Gastrocnemius medialis (tissue), 4 donors: ENCODE measurements at regions of chr19 and their contacts with region 1.

Region 1: GRCh38 chr19:10653715-10654492 is at the start of gene ILF3:
- DNase-seq: peak; percentile 100
- ATAC-seq: peak; percentile 86 to 90
- H3K4me3 ChIP-seq: peak within 1 kb of the TSS; percentile 85 to 99 (median 97)
- H3K27ac ChIP-seq: peak within 1 kb of the TSS; percentile 99 to 100 (median 99)
- H3K4me1 ChIP-seq: peaks cover 31 to 45% of the 10 kb centered on the region in 2 donors
- H3K27me3 ChIP-seq: no peaks in the 10 kb centered on the region
- CTCF ChIP-seq: peak in 2 of 5 experiments; percentile 68 to 82
- POLR2A ChIP-seq: peak; percentile 85 to 91
- total RNA-seq, gene ILF3: 67.3 to 88.2 (median 76.6) TPM

Region 2: GRCh38 chr19:10565567-10566407 is 88.1 kb before region 1 on chr19 and contains the start of gene KRI1:
- in situ Hi-C with region 1: no loop called
- intact Hi-C with region 1: loop called (anchors 5 kb)
- DNase-seq: peak; percentile 97
- ATAC-seq: peak; percentile 77 to 80
- H3K4me3 ChIP-seq: peak within 1 kb of the TSS; percentile 68 to 94 (median 86)
- H3K27ac ChIP-seq: peak within 1 kb of the TSS; percentile 84 to 92 (median 92)
- H3K4me1 ChIP-seq: peaks cover 34 to 35% of the 10 kb centered on the region in 2 donors
- H3K27me3 ChIP-seq: no peaks in the 10 kb centered on the region
- CTCF ChIP-seq: peak; percentile 34 to 75 (median 55)
- POLR2A ChIP-seq: peak; percentile 80 to 94
- total RNA-seq, gene KRI1: 16.8 to 24.1 (median 19.9) TPM

Region 3: GRCh38 chr19:10625003-10625776 is 28.7 kb before region 1 on chr19 and contains the start of gene SLC44A2:
- in situ Hi-C with region 1: no loop called
- intact Hi-C with region 1: loop called (anchors 1 kb)
- DNase-seq: peak; percentile 82 to 92
- ATAC-seq: peak; percentile 80 to 85
- H3K4me3 ChIP-seq: peak within 1 kb of the TSS; percentile 65 to 80 (median 76)
- H3K27ac ChIP-seq: peak within 1 kb of the TSS; percentile 93 to 95 (median 95)
- H3K4me1 ChIP-seq: peaks cover 32 to 35% of the 10 kb centered on the region in 2 donors
- H3K27me3 ChIP-seq: no peaks in the 10 kb centered on the region
- CTCF ChIP-seq: no peak
- POLR2A ChIP-seq: peak; percentile 82 to 92
- total RNA-seq, gene SLC44A2: 51.1 to 168 (median 105) TPM

Region 4: GRCh38 chr19:10835754-10836477 is 182.0 kb after region 1 on chr19 and contains the start of gene TMED1:
- in situ Hi-C with region 1: no loop called
- intact Hi-C with region 1: loop called (anchors 2 kb)
- DNase-seq: peak; percentile 97 to 100
- ATAC-seq: peak; percentile 85 to 89
- H3K4me3 ChIP-seq: peak within 1 kb of the TSS; percentile 73 to 87 (median 80)
- H3K27ac ChIP-seq: peak within 1 kb of the TSS; percentile 95 to 100 (median 98)
- H3K4me1 ChIP-seq: peaks cover 6 to 10% of the 10 kb centered on the region in 2 donors
- H3K27me3 ChIP-seq: no peaks in the 10 kb centered on the region
- CTCF ChIP-seq: peak in 4 of 5 experiments; percentile 23 to 77 (median 54)
- POLR2A ChIP-seq: peak; percentile 50 to 57
- total RNA-seq, gene TMED1: 33.0 to 90.0 (median 57.1) TPM